Posterior vena cava (tissue), 2 donors: ENCODE measurements at regions of chr19 and their contacts with region 1.

Region 1: GRCh38 chr19:40305403-40305802 is 20.3 kb upstream of the AKT2 start:
- DNase-seq: peak; percentile 91

Region 2: GRCh38 chr19:40335855-40336600 is 30.6 kb after region 1 on chr19:
- intact Hi-C with region 1: loop called in 1 of 2 experiments (anchors 2 kb)
- DNase-seq: no peak

Region 3: GRCh38 chr19:40398417-40399131 is 93.2 kb after region 1 on chr19:
- intact Hi-C with region 1: loop called in 1 of 2 experiments (anchors 10 kb)
- DNase-seq: no peak